Esophagus muscularis mucosa (tissue), 4 donors: ENCODE measurements at regions of chr22 and their contacts with region 1.

Region 1: DNA sequence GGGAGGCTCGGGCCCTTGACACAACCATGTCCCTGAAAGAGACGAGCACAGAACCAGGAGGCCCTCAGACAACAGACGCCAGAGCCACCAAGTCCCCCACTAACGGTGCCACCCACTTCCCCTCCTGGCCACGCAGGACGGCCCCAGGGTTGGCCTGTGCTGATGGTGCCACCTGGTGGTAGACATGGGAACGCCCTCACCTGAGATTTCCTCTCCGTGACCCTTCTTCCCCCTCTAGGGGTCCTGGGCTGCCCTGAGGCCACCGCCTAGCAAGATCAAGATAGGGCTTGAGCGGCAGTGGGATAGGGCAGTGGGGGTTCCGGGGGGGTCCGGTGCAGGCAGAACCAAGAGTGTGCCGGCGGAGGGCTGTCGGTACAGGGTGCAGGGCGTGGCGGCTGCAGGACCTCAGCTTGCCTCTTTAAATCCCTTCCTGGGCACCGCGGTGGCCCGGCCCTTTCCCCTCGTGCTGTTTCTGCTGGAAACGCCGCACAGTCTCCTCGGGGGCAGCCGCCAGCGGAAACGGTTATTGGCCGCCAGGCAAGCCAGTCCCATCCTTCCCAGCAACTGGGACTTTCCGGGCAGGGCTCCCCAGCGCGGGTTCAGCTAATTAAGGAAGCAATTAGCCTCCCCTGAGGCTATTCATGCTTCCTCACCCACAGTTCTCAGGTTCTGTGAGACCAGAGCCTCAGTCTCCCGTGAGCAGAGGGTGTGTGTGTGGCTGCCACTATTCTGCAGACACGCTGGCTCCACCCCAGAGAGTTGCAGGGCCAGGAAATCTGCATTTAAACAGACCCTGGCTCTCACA is 5.5 kb upstream of the NFAM1 start:
- DNase-seq: no peak
- H3K4me3 ChIP-seq: peak overlapping the region; percentile 46 to 61 (median 49)
- H3K27ac ChIP-seq: peak overlapping the region in 2 of 4 donors; percentile 31 to 39
- H3K4me1 ChIP-seq: peaks cover 21 to 55% (median 43%) of the 10 kb centered on the region in 4 donors
- H3K27me3 ChIP-seq: peaks cover 0 to 5% (median 0%) of the 10 kb centered on the region in 4 donors
- CTCF ChIP-seq: peak; percentile 95 to 97 (median 97)
- EP300 ChIP-seq: no peak
- POLR2A ChIP-seq: no peak

Region 2: DNA sequence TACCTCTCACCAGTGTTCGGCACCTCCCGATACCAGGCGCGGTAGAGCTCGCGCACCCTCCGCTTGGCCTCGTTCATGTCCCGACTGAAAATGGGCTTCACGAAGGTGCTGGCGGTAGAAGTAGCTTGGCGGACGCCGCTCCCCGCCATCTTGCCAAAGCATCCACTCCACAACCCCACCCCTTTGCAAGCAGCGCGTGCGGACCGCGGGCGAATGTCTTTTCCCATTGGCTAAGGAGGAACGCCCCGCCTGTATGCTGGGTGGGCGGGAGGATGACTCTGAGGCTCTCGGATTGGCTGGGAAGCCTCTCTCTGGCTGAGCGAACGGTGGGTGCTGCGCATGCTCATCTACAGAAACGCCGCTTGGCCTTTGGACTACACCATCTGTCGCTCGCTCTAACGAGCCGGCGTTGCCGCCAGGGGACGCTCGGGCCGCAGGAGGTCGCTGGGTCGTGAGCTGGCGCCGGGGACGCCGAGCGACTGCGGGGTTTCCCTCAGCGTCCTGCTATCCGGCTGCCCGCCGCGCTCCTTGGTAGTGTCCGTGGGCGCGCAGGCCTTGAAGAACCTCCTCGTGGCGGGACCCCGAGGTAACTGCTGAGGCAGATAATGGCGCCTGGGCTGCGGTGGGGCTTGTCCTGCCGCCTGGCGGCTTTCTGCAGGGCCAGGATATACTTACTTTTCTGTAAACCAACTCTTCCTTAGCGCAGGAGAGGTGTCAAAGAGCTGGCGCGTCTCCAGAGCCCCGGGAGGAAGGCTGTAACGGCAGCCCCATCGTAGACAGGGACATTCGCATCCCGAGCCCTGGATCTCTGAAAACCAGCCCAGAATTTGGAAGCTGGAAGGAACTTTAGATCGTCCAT is 346.9 kb before region 1 on chr22 and contains the start of gene NDUFA6:
- intact Hi-C with region 1: loop called (anchors 2 kb)
- DNase-seq: peak; percentile 100
- H3K4me3 ChIP-seq: peak within 1 kb of the TSS; percentile 80 to 99 (median 89)
- H3K27ac ChIP-seq: peak within 1 kb of the TSS; percentile 96 to 99 (median 98)
- H3K4me1 ChIP-seq: peaks cover 20 to 53% (median 36%) of the 10 kb centered on the region in 4 donors
- H3K27me3 ChIP-seq: no peaks in the 10 kb centered on the region
- CTCF ChIP-seq: peak; percentile 90 to 94 (median 90)
- EP300 ChIP-seq: no peak
- POLR2A ChIP-seq: peak; percentile 59
- total RNA-seq, gene NDUFA6: 54.0 to 90.9 (median 75.8) TPM

Region 3: DNA sequence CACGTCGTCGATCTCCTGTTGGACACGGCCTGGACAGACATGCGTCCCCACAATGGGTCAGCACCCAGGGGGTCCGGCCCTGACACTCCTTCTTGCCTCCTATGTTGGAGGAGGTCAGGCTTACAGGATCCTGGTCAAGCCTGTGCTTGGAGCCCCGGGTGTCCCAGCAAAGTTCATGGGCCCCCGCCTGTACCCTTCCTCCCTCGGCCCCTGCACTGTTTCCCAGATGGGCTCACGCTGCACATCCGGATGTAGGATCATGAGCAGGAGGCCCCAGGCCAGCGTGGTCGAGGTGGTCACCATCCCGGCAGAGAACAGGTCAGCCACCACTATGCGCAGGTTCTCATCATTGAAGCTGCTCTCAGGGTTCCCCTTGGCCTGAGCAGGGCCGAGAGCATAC is 310.1 kb before region 1 on chr22:
- intact Hi-C with region 1: no loop called
- DNase-seq: no peak
- H3K4me3 ChIP-seq: no peak overlapping the region
- H3K27ac ChIP-seq: no peak overlapping the region
- H3K4me1 ChIP-seq: no peaks in the 10 kb centered on the region
- H3K27me3 ChIP-seq: no peaks in the 10 kb centered on the region
- CTCF ChIP-seq: no peak
- EP300 ChIP-seq: no peak
- POLR2A ChIP-seq: no peak

Region 4: DNA sequence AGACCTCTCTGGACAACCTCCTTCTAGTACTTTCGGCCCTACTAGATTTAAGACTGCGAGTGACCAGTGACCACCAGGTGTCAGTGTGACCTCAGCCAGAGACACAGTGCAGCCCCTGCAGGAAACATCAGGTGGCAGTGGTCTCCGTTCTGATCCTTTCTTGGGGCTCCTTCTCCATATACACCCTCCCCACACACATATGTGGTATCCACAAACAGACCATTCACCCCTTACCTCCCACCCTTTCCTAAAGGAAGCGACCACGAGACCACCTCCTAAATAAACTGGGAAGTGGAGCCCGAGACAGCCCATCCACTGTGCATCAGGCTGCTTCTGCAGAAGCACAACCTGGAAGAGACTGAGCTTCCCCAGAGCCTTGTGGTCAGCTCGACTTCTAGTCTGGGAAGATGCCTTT is 268.6 kb before region 1 on chr22:
- intact Hi-C with region 1: loop called (anchors 1 kb)
- DNase-seq: no peak
- H3K4me3 ChIP-seq: no peak overlapping the region
- H3K27ac ChIP-seq: no peak overlapping the region
- H3K4me1 ChIP-seq: peaks cover 6 to 33% (median 21%) of the 10 kb centered on the region in 4 donors
- H3K27me3 ChIP-seq: no peaks in the 10 kb centered on the region
- CTCF ChIP-seq: peak; percentile 78 to 89 (median 85)
- EP300 ChIP-seq: no peak
- POLR2A ChIP-seq: no peak

Region 5: DNA sequence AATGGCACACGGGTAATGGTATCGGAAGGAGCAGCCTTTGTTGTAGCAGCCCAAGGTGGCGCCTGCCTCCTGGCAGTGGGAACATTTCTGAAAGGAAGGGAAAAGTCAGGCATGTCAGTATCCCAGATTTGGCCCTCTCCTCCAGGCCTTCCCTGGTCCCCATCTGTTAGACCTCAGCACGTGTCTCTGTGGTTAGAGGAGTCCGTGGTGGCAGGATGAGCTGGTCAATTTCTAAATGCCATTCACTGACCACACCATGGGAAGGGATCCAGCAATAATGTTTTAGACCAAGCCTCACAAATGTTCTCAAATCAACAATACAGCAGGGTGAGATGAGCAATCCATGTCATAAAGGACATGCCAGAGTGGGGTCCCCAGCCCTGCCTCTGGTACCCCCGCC is 258.1 kb before region 1 on chr22:
- intact Hi-C with region 1: no loop called
- DNase-seq: no peak
- H3K4me3 ChIP-seq: no peak overlapping the region
- H3K27ac ChIP-seq: peak overlapping the region in 3 of 4 donors; percentile 30 to 63 (median 58)
- H3K4me1 ChIP-seq: peaks cover 7 to 44% (median 24%) of the 10 kb centered on the region in 4 donors
- H3K27me3 ChIP-seq: no peaks in the 10 kb centered on the region
- CTCF ChIP-seq: no peak
- EP300 ChIP-seq: no peak
- POLR2A ChIP-seq: no peak

Region 6: GRCh38 chr22:42369245-42370041 is 68.2 kb before region 1 on chr22:
- intact Hi-C with region 1: loop called (anchors 5 kb)
- DNase-seq: peak; percentile 97
- H3K4me3 ChIP-seq: peak overlapping the region; percentile 64 to 71 (median 70)
- H3K27ac ChIP-seq: peak overlapping the region; percentile 36 to 76 (median 58)
- H3K4me1 ChIP-seq: peaks cover 44 to 54% (median 52%) of the 10 kb centered on the region in 4 donors
- H3K27me3 ChIP-seq: peaks cover 0 to 4% (median 0%) of the 10 kb centered on the region in 4 donors
- CTCF ChIP-seq: no peak
- EP300 ChIP-seq: no peak
- POLR2A ChIP-seq: no peak

Region 7: GRCh38 chr22:42511401-42511891 is 73.8 kb after region 1 on chr22:
- intact Hi-C with region 1: no loop called
- DNase-seq: no peak
- H3K4me3 ChIP-seq: no peak overlapping the region
- H3K27ac ChIP-seq: no peak overlapping the region
- H3K4me1 ChIP-seq: peaks cover 6 to 17% (median 6%) of the 10 kb centered on the region in 4 donors
- H3K27me3 ChIP-seq: no peaks in the 10 kb centered on the region
- CTCF ChIP-seq: no peak
- EP300 ChIP-seq: no peak
- POLR2A ChIP-seq: no peak